BJ (cell line): ENCODE measurements at regions of chr11 and their contacts with region 1.

Region 1: DNA sequence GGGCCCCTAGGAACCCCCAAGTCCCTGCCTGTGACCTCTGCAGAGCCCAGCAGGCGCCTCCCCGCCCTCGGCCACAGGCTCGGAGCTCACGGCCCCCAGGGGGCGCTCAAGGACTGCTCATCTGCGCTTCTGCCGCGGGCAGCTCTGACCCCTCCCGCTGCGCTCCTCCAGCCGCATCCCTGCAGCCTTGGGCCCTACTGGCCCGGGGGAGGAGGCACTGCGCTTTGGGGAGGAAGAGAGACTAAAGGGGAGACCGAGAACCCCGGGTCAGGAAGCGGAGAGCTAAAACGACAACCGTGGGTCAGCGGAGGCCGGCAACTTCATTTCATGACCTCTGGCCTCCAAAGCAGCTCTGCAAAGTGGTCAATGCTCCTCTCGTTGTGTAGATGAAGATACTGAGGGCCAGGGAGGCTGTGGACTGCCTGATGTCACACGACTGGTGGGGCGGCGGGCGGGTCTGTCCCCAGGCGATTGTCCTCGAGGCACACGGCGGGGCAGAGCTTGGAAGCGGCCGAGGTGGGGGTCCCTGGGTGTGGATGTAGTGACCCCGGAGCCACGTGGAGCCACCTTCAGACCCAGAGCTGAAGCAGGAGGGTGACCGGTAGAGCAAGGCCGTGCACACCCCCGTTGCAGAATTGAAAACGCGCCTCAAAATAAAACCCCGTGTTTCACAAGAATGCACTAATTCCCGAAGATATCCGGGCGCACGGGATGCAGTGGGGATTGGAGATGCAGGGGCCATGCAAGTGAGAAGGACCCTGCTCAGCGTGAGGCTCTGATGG is 2.7 kb upstream of the KRTAP5-6 start:
- DNase-seq: no peak
- H3K4me3 ChIP-seq: no peak overlapping the region
- H3K27me3 ChIP-seq: peaks cover 14% of the 10 kb centered on the region
- CTCF ChIP-seq: peak; percentile 93

Region 2: DNA sequence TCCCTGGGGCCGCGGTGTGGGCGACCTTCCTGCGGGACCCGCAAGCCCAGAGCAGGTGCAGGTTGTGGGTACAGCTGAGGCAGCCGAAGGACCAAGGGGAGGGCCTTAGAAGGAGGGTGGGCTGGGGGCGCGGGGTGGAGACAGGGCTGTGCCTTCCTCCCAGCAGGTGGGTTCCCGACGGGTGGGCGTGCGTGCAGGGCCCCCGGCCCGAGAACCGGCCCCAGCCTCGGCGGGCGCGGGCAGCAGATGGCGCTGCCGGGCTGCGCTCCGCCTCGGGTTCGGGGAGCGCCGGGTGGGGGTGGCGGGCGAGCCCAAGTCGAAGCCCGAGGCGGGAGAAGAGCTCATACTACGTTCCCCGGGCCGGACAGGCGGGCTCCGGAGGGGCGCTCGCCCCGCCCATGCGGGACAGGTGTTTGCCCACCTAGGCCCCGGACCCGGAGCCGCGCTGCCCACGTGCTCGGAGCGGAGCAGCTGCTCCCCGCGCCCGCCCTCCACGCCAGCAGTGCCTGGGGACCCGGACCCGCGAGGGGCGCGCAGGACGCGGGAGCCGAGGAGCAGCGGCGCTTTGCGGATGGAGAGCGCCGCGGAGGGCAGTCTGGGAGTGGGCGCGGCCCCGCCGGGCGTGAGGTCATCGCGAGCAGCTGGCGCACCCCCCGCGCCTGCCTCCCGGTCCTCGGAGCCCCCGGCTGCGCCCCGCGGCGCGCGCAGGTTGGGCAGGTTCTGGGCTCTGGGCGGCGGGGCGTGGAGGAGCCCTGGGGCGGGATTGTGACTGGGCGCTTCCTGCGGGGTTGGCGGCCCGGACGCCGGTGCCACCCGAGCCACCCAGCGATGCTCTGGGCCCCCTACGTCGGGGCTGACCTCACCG is 147.5 kb before region 1 on chr11:
- CTCF ChIA-PET with region 1: no interaction called
- POLR2A ChIA-PET with region 1: no interaction called
- DNase-seq: no peak
- H3K4me3 ChIP-seq: peak overlapping the region; percentile 21; the same call in 1 of the 2 replicates
- H3K27me3 ChIP-seq: peaks cover 30% of the 10 kb centered on the region
- CTCF ChIP-seq: peak; percentile 49

Region 3: DNA sequence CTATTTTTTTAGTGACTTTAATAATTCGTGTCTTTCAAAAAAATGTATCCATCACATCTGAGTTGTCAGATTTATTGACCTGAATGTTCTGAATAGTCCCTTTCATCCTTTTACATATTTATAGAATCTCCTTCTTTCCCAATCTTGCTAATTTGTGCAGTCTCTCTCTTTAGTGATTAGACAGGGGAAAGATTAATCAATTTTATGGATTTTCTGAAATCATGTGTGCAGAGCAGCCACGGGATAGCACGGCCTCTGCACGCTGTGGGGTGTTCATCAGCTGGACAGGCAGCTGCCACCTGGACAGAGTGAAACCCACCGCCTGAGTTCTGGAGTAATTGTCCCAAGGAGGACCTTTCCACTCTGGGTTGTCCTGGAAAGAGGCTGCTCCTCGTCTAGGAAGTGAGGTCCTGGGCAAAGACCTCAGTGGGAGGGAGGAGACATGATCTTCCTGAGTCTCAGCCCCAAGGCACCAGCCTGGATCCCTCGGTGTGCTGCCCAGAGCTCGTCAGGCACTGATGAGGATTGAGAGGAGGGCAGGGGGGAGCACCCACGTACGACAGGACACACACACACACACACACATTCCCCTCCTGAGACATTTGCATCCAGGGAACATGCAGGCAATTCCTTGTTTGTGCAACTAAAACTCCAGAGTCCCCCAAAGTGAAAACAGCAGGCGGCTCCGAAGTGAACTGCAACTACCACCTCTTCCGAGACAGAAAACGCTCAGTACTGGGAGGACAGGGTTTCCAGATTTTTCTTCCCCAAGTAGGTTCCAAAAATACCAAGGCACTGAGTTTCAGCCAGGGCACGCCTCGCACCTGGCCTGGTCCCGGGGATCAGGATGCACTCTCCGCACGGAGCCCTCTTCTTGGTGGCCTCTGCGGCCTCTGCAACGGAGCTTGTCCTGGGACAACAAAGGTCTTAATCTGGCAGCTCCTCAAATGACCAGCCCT is 19.8 kb before region 1 on chr11:
- CTCF ChIA-PET with region 1: interaction called, 53 read pairs
- POLR2A ChIA-PET with region 1: no interaction called
- DNase-seq: no peak
- H3K4me3 ChIP-seq: no peak overlapping the region
- H3K27me3 ChIP-seq: peaks cover 25% of the 10 kb centered on the region
- CTCF ChIP-seq: no peak

Region 4: GRCh38 chr11:1733716-1734640 is 39.7 kb after region 1 on chr11:
- CTCF ChIA-PET with region 1: interaction called, 11 read pairs
- POLR2A ChIA-PET with region 1: no interaction called
- DNase-seq: no peak
- H3K4me3 ChIP-seq: no peak overlapping the region
- H3K27me3 ChIP-seq: peaks cover 5% of the 10 kb centered on the region
- CTCF ChIP-seq: no peak

Region 5: DNA sequence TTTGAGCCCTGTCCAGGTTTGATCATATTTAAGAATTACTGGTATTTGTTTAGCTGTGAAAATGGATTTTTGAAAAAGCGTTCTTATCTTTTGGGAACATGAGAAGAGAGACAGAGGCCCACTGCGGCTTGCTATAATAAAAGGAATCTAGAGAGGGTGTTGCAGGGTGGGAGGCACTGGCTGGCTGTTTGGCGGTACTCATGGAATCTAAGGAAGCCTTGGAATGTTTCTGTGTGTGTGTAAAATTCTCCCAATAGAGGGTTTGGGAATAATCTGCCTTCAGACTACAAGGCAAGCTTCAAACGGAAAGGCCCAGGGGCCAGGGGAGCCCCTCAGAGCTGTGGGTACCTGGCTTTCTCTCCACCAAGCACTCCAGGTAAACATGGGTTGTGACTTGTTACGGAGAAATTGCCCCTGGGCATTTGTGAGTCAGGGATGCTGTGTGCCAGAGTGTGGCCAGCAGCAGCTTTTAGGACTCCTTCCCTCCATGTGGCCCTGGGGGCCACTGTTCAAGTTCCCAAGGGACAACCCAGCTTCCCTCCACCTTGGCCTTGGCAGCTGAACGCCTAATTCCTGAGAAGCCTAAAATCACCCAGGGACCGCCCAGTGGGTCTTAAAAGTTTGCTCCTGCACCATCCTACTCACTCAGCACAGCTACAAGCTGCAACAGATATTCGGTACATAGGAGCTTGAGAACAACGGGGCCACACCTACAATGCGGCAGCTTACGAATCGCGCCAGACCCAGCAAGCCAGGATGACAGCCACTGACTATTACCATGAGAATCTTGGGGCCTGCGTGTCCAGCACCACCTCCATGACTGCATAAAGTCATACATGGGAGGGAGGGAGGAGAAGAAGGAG is 126.4 kb after region 1 on chr11:
- CTCF ChIA-PET with region 1: interaction called, 510 read pairs
- POLR2A ChIA-PET with region 1: no interaction called
- DNase-seq: no peak
- H3K4me3 ChIP-seq: no peak overlapping the region
- H3K27me3 ChIP-seq: peaks cover 3% of the 10 kb centered on the region; the same call in 1 of the 2 replicates
- CTCF ChIP-seq: no peak

Region 6: GRCh38 chr11:1876361-1877063 is 182.3 kb after region 1 on chr11:
- CTCF ChIA-PET with region 1: interaction called, 34 read pairs
- POLR2A ChIA-PET with region 1: no interaction called
- DNase-seq: no peak
- H3K4me3 ChIP-seq: no peak overlapping the region
- H3K27me3 ChIP-seq: no peaks in the 10 kb centered on the region; the same call in 1 of the 2 replicates
- CTCF ChIP-seq: peak; percentile 70

Region 7: DNA sequence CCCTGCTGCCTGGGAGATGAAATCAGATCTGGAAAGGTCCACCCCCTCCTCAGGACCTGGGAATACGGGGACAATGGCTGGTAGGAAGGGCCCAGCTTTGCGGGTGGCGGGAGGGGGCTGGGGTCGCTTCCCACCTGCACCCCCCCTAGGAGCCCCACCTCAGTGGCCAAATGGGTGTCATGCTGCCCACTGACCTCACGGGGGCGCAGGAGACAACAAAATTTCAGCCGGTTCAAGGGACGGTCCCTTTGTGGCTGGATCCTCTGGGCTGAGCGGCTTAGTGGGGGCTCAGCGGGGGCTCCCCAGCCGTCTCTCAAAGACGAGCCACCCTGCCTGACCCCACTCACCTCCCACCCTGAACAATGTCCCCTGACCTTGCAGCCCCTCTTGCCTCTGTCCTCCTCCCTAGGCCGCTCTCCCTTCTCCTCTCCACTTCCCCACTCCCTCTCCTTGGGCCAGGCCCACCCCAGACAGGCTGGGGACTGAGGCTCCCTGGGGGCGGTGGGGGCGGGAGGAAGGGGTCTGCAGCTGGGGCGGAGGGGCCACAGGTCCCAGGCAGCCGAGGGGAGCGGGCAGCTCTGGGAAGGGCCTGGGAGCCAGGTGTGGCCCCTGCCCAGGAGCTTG is 342.7 kb after region 1 on chr11:
- CTCF ChIA-PET with region 1: interaction called, 10 read pairs
- POLR2A ChIA-PET with region 1: no interaction called
- DNase-seq: no peak
- H3K4me3 ChIP-seq: no peak overlapping the region
- H3K27me3 ChIP-seq: no peaks in the 10 kb centered on the region
- CTCF ChIP-seq: no peak